ENCODE measurements at regions of chr17 and their contacts with region 1.

Region 1: GRCh38 chr17:73311781-73312641 is at the start of gene CDC42EP4:
- DNase-seq: peak; percentile 97
- ATAC-seq: peak; percentile 92
- total RNA-seq, gene CDC42EP4: 58.8 TPM

Region 2: GRCh38 chr17:73192894-73193701 is 118.9 kb before region 1 on chr17 and contains the start of gene COG1:
- intact Hi-C with region 1: loop called (anchors 5 kb)
- DNase-seq: peak; percentile 94
- ATAC-seq: peak; percentile 88
- total RNA-seq, gene COG1: 49.3 TPM

Region 3: DNA sequence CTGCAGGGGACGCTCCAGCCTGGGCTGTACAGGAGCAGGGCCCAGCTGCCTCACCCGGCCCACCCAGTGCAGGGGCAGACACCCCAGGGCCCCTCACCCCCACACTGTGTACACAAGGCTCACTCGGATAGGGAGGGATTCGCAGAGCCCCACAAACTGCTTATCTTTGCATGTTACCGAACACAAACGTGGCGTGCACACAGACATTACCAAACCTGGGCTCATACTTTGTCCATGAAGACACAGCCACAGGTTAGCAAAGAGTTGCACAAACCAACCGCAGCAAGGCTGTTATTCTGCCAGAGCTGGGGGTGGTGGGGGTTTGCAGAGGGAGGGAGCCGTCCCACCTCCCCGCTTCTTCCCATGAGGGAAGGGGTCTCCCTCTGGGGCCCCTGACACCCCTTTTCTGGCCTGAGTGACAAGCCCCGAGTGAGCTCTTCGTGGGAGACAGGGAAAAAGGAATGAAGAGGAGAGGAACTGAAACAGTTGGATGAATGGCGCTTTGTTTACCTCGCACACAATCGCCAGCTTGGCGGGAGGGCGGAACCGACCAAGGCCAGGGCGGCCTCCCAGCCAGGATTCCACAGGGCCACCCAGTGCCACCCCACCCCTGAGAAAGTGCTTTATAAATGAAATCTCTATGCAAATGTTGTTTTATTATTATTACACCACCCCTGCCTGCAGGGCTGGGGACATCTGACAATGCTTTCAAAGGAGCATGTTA is 49.9 kb before region 1 on chr17:
- intact Hi-C with region 1: loop called (anchors 5 kb)
- DNase-seq: no peak
- ATAC-seq: no peak

Region 4: DNA sequence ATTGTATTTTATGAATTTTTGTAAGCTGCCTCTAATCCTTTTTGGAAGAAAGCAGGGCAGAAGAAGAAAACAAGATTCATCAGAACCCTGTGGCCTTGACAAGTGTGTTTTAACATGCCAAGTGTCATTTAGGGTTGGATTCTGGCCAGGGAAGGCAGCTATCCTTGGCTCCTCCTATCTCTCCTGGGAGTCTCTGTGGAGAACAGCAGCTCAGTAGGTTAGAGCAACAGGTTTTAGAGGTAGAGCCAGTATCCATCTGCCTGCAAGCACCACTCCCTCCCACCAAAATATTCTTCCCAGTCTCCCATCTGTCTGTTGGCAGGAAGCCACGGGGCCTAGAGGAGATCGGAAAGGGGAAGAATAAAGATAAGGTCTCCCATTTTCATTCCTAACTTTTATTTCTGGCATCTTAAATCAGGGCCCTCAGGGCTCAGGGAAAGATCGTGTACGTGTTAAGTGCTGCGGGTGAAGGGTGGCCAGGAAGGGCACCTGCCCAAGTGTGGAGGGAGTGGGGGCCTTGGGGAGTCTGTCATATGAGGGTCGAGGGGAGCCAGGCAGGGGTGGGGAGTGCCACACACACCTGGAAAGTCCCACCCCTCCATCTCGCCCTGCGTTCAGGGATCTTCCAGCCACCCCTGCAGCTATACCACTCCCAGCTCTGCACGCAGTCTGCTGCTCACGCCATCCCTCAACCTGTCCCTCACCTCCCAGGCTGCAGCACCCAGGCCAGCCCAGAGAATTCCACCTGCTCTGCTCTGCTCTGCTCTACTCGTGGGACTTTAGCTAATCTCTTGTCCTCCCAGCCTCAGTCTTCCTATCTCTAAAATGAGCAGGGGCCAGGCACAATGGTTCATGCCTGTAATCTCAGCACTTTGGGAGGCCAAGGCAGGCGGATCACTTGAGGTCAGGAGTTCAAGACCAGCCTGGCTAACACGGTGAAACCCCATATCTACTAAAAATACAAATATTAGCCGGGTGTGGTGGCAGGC is 33.3 kb before region 1 on chr17:
- intact Hi-C with region 1: loop called (anchors 5 kb)
- DNase-seq: no peak
- ATAC-seq: peak; percentile 58

Region 5: GRCh38 chr17:73291964-73292531 is 20.0 kb before region 1 on chr17:
- intact Hi-C with region 1: loop called (anchors 2 kb)
- DNase-seq: peak; percentile 84
- ATAC-seq: peak; percentile 77

Region 6: GRCh38 chr17:73359987-73360410 is 48.0 kb after region 1 on chr17:
- intact Hi-C with region 1: loop called (anchors 2 kb)
- DNase-seq: peak; percentile 80
- ATAC-seq: peak; percentile 74

Region 7: DNA sequence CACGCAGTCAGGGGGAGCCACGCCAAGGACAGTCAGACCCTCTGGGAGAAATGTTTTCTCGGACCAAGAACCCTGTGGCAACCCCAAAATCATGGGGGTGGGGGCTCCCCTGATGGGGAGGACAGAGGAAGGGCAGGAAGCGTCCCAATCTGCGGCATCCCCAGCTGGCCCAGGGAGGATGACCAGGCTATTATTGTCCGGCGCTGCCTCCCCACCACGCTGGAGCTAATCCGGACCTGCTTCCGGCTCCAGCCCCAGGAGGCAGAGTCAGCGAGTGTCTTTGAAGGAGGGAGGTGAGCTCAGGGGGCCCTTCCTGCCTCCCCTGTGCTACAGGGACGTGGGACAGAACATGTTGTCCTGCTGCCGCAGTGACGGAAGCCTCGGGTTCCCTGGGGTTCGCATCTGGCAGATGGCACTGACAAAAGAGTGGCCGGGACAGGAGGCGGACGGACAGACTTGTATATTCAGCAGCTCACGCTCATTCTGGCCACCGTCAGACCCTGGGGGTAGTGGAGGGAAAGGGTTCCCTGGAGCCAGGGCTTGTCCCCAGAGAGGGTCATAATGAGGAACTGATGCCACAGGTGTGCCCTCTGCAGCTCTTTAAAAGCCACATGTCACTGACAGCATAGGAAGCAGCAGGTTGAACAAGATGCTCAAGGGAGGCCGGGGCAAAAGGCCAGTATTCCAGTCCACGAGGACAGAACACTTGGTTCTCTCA is 54.1 kb after region 1 on chr17:
- intact Hi-C with region 1: loop called (anchors 2 kb)
- DNase-seq: peak; percentile 74
- ATAC-seq: peak; percentile 57